ENCODE measurements at regions of chr9 and their contacts with region 1.

Region 1: GRCh38 chr9:19230356-19231125 is at the start of gene DENND4C:
- DNase-seq: peak; percentile 90
- H3K4me3 ChIP-seq: peak within 1 kb of the TSS; percentile 67 to 99 (median 98)
- H3K27ac ChIP-seq: peak within 1 kb of the TSS; percentile 93 to 100 (median 98)
- H3K4me1 ChIP-seq: peaks cover 0 to 46% (median 23%) of the 10 kb centered on the region in 4 donors
- H3K27me3 ChIP-seq: no peaks in the 10 kb centered on the region
- CTCF ChIP-seq: no peak
- EP300 ChIP-seq: no peak
- POLR2A ChIP-seq: peak; percentile 60 to 63
- total RNA-seq, gene DENND4C: 75.6 to 109 (median 101) TPM

Region 2: DNA sequence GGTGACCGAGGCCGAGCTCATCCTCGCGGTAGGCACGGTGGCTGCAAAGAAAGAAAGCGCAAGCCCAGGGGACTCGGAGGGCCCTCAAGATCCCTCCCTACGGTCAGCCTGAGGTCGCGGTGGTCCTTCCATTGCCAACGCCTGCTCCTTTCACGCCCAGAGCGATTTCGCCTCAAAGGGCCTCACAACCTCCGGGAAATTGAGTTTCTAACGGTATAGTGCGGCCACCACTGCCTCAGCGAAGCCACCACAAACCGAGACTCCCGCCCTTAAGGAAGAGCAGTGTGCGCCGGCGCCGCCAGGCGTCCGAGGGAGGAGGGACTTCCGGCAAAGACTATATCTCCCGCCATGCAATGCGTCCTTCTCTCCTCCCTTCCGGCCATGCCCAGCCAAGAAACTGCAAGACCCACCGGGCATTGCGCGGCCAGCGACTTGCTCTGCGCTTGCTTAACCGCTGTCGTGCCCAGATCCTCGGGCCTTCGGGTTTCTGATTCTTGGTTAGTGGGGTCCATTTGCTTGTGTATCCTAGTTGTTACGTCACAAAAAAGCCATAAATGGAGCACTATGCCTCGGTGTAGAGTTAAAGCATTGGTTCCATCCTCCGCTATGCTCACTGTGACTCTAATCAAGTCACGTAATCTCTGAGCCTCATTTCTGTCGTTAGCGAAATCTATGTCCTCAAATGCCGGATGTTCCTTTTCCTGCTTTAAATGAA is 127.8 kb before region 1 on chr9 and contains the start of gene HAUS6:
- intact Hi-C with region 1: loop called (anchors 5 kb)
- DNase-seq: peak; percentile 99
- H3K4me3 ChIP-seq: peak within 1 kb of the TSS; percentile 66 to 78 (median 74)
- H3K27ac ChIP-seq: peak within 1 kb of the TSS; percentile 71 to 90 (median 86)
- H3K4me1 ChIP-seq: peaks cover 0 to 36% (median 27%) of the 10 kb centered on the region in 4 donors
- H3K27me3 ChIP-seq: no peaks in the 10 kb centered on the region
- CTCF ChIP-seq: peak; percentile 59 to 77 (median 74)
- EP300 ChIP-seq: peak in 1 of 4 donors; percentile 53
- POLR2A ChIP-seq: peak in 1 of 2 donors; percentile 44
- total RNA-seq, gene HAUS6: 6.9 to 12.5 (median 7.8) TPM

Region 3: GRCh38 chr9:19116107-19116790 is 114.3 kb before region 1 on chr9:
- intact Hi-C with region 1: no loop called
- DNase-seq: no peak
- H3K4me3 ChIP-seq: no peak overlapping the region
- H3K27ac ChIP-seq: no peak overlapping the region
- H3K4me1 ChIP-seq: no peaks in the 10 kb centered on the region
- H3K27me3 ChIP-seq: no peaks in the 10 kb centered on the region
- CTCF ChIP-seq: no peak
- EP300 ChIP-seq: no peak
- POLR2A ChIP-seq: no peak

Region 4: DNA sequence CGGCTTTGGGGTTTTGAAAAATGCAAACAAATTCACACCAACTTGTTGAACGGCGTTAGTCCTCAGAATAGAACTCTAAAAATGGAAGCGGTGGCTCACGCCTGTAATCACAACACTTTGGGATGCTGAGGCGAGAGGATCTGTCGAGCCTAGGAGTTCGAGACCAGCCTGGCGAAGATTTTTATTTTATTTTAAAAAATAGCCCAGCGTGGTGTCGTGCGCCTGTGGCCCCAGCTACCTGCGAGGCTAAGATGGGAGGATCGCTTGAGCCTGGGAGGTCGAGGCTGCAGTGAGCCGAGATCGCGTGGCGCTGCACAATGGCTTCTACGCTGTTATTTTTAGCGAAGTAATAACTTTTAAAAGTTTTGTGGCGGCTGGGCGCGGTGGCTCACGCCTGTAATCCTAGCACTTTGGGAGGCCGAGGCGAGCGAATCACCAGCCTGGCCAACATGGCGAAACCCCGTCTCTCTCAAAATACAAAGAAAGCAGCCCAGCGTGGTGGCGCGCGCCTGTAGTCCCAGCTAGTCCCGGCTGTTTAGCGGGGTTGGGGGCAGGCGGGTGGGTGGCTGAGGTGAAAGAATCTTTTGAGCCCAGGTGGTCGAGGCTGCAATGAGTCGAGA is 102.5 kb before region 1 on chr9:
- intact Hi-C with region 1: loop called (anchors 1 kb)
- DNase-seq: peak; percentile 72
- H3K4me3 ChIP-seq: peak overlapping the region; percentile 67 to 90 (median 80)
- H3K27ac ChIP-seq: peak overlapping the region; percentile 94 to 99 (median 96)
- H3K4me1 ChIP-seq: peaks cover 0 to 26% (median 15%) of the 10 kb centered on the region in 4 donors
- H3K27me3 ChIP-seq: no peaks in the 10 kb centered on the region
- CTCF ChIP-seq: no peak
- EP300 ChIP-seq: no peak
- POLR2A ChIP-seq: no peak

Region 5: GRCh38 chr9:19184144-19184917 is 46.2 kb before region 1 on chr9:
- intact Hi-C with region 1: loop called (anchors 1 kb)
- DNase-seq: peak; percentile 95
- H3K4me3 ChIP-seq: no peak overlapping the region
- H3K27ac ChIP-seq: peak overlapping the region; percentile 72 to 91 (median 82)
- H3K4me1 ChIP-seq: peaks cover 0 to 27% (median 23%) of the 10 kb centered on the region in 4 donors
- H3K27me3 ChIP-seq: no peaks in the 10 kb centered on the region
- CTCF ChIP-seq: no peak
- EP300 ChIP-seq: peak in 2 of 4 donors; percentile 46 to 68
- POLR2A ChIP-seq: no peak

Region 6: DNA sequence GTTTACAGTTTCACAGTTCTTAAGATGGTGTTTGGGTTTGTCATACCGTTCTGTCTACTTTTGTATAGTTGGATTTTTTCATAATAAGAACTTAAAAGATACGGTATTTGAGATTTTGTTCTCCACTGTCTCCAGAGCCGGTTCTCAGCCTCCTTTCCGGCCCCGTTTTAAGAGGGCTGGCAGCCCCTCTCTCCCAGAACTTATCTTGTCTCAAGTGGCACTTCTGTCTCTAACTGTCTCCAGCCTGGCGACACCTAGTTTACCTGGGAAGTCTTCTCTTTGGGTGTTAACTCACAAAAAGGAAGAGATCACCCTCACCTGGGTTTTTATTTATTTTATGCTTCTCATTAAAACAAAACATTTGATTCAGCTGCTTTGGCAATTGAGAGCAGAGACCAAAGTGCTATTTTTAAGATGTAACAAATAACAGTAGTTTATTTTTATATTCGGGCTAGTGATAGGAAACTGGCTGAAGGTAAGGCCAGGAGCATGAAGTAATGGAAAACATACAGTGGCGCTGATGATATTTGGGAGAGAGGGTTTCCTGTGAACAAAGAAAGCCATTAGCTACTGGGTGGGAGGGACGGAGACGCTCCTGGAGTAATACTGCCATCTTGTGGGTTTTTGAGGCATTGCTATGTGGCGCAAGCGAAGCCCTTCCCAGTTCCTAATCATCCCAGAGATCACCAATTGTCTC is 226.6 kb after region 1 on chr9:
- intact Hi-C with region 1: loop called (anchors 5 kb)
- DNase-seq: peak; percentile 84
- H3K4me3 ChIP-seq: peak overlapping the region in 3 of 4 donors; percentile 2 to 29 (median 15)
- H3K27ac ChIP-seq: peak overlapping the region in 3 of 4 donors; percentile 13 to 45 (median 33)
- H3K4me1 ChIP-seq: peaks cover 0 to 11% (median 4%) of the 10 kb centered on the region in 4 donors
- H3K27me3 ChIP-seq: no peaks in the 10 kb centered on the region
- CTCF ChIP-seq: peak; percentile 91 to 97 (median 92)
- EP300 ChIP-seq: no peak
- POLR2A ChIP-seq: no peak

Region 7: GRCh38 chr9:19614294-19614693 is 383.8 kb after region 1 on chr9:
- intact Hi-C with region 1: no loop called
- DNase-seq: no peak
- H3K4me3 ChIP-seq: no peak overlapping the region
- H3K27ac ChIP-seq: no peak overlapping the region
- H3K4me1 ChIP-seq: no peaks in the 10 kb centered on the region
- H3K27me3 ChIP-seq: no peaks in the 10 kb centered on the region
- CTCF ChIP-seq: no peak
- EP300 ChIP-seq: no peak
- POLR2A ChIP-seq: no peak

Measured in sigmoid colon (tissue), 7 donors.